Activated B cell treated with CpG ODN at 0.5 μM for 24 hours (primary cell): ENCODE measurements at regions of chr14 and their contacts with region 1.

Region 1: GRCh38 chr14:20427231-20428009 is 8.5 kb downstream of the KLHL33 start:
- DNase-seq: no peak
- ATAC-seq: peak; percentile 75
- H3K4me3 Mint-ChIP-seq: peak overlapping the region; percentile 73
- H3K27ac Mint-ChIP-seq: peak overlapping the region; percentile 96
- H3K4me1 Mint-ChIP-seq: peaks cover 57% of the 10 kb centered on the region
- H3K27me3 Mint-ChIP-seq: no peaks in the 10 kb centered on the region
- CTCF ChIP-seq: no peak

Region 2: GRCh38 chr14:20278414-20278813 is 149.0 kb before region 1 on chr14:
- CTCF ChIA-PET with region 1: no interaction called
- POLR2A ChIA-PET with region 1: no interaction called
- intact Hi-C with region 1: no loop called
- DNase-seq: no peak
- ATAC-seq: no peak
- H3K4me3 Mint-ChIP-seq: no peak overlapping the region
- H3K27ac Mint-ChIP-seq: no peak overlapping the region
- H3K4me1 Mint-ChIP-seq: peaks cover 16% of the 10 kb centered on the region
- H3K27me3 Mint-ChIP-seq: no peaks in the 10 kb centered on the region
- CTCF ChIP-seq: no peak

Region 3: GRCh38 chr14:20440882-20441281 is 13.5 kb after region 1 on chr14:
- CTCF ChIA-PET with region 1: interaction called, 3 read pairs
- POLR2A ChIA-PET with region 1: interaction called, 3 read pairs
- intact Hi-C with region 1: loop called (anchors 1 kb)
- DNase-seq: no peak
- ATAC-seq: peak; percentile 71
- H3K4me3 Mint-ChIP-seq: peak overlapping the region; percentile 28
- H3K27ac Mint-ChIP-seq: peak overlapping the region; percentile 70
- H3K4me1 Mint-ChIP-seq: peaks cover 52% of the 10 kb centered on the region
- H3K27me3 Mint-ChIP-seq: no peaks in the 10 kb centered on the region
- CTCF ChIP-seq: no peak

Region 4: GRCh38 chr14:20461274-20462001 is 34.0 kb after region 1 on chr14 and contains the start of gene PIP4P1:
- CTCF ChIA-PET with region 1: no interaction called
- POLR2A ChIA-PET with region 1: interaction called, 12 read pairs
- intact Hi-C with region 1: no loop called
- DNase-seq: peak; percentile 94
- ATAC-seq: peak; percentile 86
- H3K4me3 Mint-ChIP-seq: peak within 1 kb of the TSS; percentile 91
- H3K27ac Mint-ChIP-seq: peak within 1 kb of the TSS; percentile 96
- H3K4me1 Mint-ChIP-seq: peaks cover 55% of the 10 kb centered on the region
- H3K27me3 Mint-ChIP-seq: no peaks in the 10 kb centered on the region
- CTCF ChIP-seq: no peak
- total RNA-seq, gene PIP4P1: 84.8 and 87.3 TPM in 2 replicates